HCT116 (cell line): ENCODE measurements at regions of chr14 and their contacts with region 1.

Region 1: DNA sequence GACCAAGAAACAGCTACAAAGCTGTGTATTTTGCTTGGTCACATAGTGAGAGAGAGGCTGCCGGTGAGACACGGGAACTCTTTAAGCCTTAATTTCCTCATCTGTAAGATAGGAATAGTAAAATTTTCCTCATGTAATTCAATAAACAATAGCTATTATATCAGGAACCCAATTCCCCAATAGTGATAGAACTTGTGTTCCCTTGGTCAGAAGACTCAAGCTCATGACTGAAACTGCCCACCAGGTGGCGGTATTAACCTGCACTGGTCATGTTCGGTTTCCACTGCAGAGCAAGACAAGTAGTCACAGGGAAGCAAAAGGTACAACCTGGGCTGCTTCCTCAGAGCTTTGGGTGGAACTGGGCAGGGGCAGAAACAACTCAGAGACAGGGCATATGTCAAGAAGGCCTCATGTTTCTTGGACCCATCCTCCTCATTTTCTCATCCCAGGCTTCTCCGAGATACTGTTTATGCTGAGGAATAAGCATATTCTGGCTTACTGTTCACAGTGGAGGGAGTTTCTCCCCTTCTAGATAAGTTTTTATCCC is 4.2 kb upstream of the AJUBA start:
- DNase-seq: peak; percentile 81
- ATAC-seq: peak; percentile 47
- H3K4me3 ChIP-seq: no peak overlapping the region
- H3K27ac ChIP-seq: no peak overlapping the region
- H3K4me1 ChIP-seq: peaks cover 2 to 9% of the 10 kb centered on the region in 2 experiments; a peak in 2 of 4 replicates
- H3K27me3 ChIP-seq: no peaks in the 10 kb centered on the region
- CTCF ChIP-seq: peak in 2 of 3 experiments; percentile 89 to 98; a peak in 4 of 6 replicates
- POLR2A ChIP-seq: no peak
- RAD21 ChIP-seq: no peak

Region 2: DNA sequence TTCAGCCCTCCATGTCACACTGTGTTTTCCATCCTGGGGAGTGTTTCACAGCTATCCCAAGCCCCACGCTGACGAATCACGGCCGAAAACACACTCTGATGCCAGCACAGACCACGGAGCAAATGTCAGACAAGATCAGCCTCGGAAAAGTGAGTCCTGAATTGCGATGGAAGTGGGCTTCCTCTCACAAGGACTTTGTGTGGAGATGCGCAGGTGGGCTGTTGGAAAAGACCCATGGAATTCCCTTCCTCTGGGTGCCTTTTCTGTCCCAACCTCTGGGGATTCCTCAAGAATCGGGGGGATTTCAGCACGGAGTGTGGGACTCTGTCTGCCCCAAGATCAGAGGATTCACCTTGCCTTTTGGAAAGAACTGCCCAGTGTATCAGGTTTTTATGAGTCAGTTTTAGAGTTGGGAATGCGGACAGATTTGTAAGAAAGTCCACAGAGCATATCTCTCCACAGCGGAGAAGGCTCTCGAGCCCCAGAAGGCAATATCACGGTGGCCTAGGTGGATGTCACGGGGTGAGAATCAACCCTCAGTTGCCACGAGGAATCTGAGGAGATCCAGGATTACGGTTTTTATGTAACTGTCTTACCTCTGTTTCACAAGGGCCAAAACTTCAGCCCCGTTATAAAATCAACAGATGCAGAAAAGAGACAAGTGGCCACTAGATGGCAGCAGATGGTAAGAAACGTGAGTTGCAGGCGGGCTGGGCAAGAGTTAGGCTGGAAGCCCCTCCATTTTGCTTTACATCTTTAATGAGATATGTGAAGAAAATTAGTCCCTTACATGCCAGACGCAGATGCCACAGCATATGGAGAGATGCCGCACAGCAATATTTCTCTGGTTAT is 599.4 kb before region 1 on chr14:
- CTCF ChIA-PET with region 1: no interaction called
- POLR2A ChIA-PET with region 1: no interaction called
- RAD21 ChIA-PET with region 1: no interaction called
- intact Hi-C with region 1: loop called (anchors 10 kb)
- DNase-seq: peak; percentile 53
- ATAC-seq: peak; percentile 75
- H3K4me3 ChIP-seq: no peak overlapping the region
- H3K27ac ChIP-seq: no peak overlapping the region
- H3K4me1 ChIP-seq: no peaks in the 10 kb centered on the region
- H3K27me3 ChIP-seq: peaks cover 83% of the 10 kb centered on the region
- CTCF ChIP-seq: peak; percentile 64 to 89 (median 66)
- POLR2A ChIP-seq: no peak
- RAD21 ChIP-seq: peak; percentile 77

Region 3: DNA sequence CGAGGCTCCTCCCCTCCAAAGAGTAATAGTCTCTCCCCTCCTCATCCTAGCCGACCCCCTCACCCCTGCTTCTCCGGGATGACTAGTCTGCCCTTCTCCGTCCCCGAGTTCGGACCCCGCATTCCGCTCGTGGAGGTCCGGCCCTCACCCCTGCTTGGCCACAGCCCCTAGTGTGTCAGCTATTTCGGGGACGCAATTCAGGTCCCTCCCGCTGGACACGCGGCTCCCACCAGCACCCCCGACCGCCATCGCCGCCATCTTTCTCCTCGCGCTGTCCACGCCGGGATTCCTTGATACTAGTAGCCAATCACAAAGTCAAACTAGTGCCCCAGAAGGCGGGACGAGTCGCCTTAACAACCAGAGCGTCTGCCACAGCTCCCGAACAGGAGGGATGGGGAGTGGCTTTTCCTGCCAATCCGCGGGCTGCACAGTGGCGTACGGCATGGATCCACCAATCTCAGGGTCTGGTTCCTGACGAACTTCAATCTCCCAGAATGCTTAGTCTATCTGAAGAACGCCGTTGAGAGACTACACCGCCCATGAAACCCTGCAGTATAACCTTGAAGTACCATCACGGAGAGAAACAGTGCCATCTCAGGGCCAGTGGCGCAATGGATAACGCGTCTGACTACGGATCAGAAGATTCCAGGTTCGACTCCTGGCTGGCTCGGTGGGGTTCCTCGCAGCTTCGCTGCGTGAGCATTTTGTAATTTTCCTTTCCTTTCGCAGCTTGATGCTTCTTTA is 57.3 kb before region 1 on chr14 and contains the start of gene PRMT5:
- CTCF ChIA-PET with region 1: interaction called, 14 read pairs
- POLR2A ChIA-PET with region 1: interaction called, 3 read pairs
- RAD21 ChIA-PET with region 1: interaction called in 1 of 2 experiments, 3 read pairs
- intact Hi-C with region 1: loop called (anchors 2 kb)
- DNase-seq: peak; percentile 99
- ATAC-seq: peak; percentile 91
- H3K4me3 ChIP-seq: peak within 1 kb of the TSS; percentile 75 to 96
- H3K27ac ChIP-seq: peak within 1 kb of the TSS; percentile 83
- H3K4me1 ChIP-seq: peaks cover 31 to 64% of the 10 kb centered on the region in 2 experiments
- H3K27me3 ChIP-seq: no peaks in the 10 kb centered on the region
- CTCF ChIP-seq: no peak
- POLR2A ChIP-seq: peak; percentile 78
- RAD21 ChIP-seq: no peak
- total RNA-seq, gene PRMT5: 186 TPM

Region 4: DNA sequence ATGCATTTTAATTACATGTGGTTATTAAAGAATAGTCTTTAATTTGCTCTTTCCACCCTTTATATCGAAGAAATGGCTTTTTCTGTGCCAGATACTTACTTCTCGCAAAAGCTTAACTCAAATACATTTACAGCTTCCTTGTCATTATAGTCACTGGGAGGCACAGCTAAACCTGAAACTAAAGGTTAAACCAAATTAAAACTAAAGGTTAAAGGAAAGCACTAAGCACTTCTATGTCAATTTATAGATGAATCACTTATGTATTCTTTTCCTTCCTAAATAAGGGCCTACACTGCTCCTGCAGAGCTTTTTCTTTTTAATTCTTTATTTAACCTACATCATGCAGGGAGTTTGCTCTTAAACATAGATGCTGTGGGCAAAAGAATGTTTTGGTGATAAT is 14.3 kb after region 1 on chr14:
- CTCF ChIA-PET with region 1: interaction called, 71 read pairs
- POLR2A ChIA-PET with region 1: interaction called, 6 read pairs
- RAD21 ChIA-PET with region 1: interaction called, 4 to 6 read pairs
- intact Hi-C with region 1: no loop called
- DNase-seq: no peak
- ATAC-seq: no peak
- H3K4me3 ChIP-seq: no peak overlapping the region
- H3K27ac ChIP-seq: no peak overlapping the region
- H3K4me1 ChIP-seq: peaks cover 2 to 15% of the 10 kb centered on the region in 2 experiments
- H3K27me3 ChIP-seq: no peaks in the 10 kb centered on the region
- CTCF ChIP-seq: no peak
- POLR2A ChIP-seq: no peak
- RAD21 ChIP-seq: no peak

Region 5: GRCh38 chr14:23068476-23069412 is 82.2 kb after region 1 on chr14:
- CTCF ChIA-PET with region 1: interaction called, 41 read pairs
- POLR2A ChIA-PET with region 1: interaction called, 3 read pairs
- RAD21 ChIA-PET with region 1: interaction called, 3 to 5 read pairs
- intact Hi-C with region 1: no loop called
- DNase-seq: peak; percentile 88
- ATAC-seq: peak; percentile 76
- H3K4me3 ChIP-seq: no peak overlapping the region
- H3K27ac ChIP-seq: peak overlapping the region; percentile 54
- H3K4me1 ChIP-seq: peaks cover 29 to 36% of the 10 kb centered on the region in 2 experiments
- H3K27me3 ChIP-seq: no peaks in the 10 kb centered on the region
- CTCF ChIP-seq: peak; percentile 99 to 100 (median 99)
- POLR2A ChIP-seq: no peak
- RAD21 ChIP-seq: peak; percentile 80

Region 6: DNA sequence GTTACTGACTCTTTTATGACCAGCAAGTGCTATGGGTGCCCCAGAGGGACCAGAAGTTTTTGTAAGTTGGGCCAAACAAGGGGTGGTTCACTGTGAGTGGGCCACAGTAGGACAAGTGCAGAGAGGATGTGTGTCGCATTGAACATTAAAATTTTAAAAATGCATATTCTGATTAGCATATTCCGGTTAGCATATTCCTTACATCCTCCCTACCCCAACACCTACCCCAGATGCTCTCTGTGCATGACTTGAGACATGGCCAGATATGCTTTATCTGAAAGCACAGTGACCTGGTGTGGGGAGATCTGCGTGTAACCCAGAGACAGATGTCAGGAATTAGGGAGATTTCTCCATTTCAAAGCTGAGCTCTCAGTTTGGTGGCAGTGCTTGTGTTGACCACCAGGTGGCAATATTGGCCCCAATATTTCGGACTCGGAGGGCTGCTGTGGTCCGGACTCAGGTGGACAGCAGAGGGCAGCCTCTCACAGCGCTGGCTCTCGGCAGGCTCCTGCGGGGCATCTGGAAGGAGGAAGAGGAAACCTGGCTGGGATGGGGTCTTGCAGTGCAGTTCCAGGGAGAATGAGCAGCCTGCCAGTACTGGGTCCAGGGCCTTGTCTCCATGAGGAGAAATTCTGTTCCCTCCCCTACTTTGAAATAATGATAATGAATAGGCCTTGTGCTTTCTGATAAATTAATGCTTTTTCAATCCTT is 134.1 kb after region 1 on chr14:
- CTCF ChIA-PET with region 1: interaction called, 10 read pairs
- POLR2A ChIA-PET with region 1: no interaction called
- RAD21 ChIA-PET with region 1: interaction called in 1 of 2 experiments, 3 read pairs
- intact Hi-C with region 1: no loop called
- DNase-seq: peak; percentile 73
- ATAC-seq: peak; percentile 97
- H3K4me3 ChIP-seq: no peak overlapping the region
- H3K27ac ChIP-seq: no peak overlapping the region
- H3K4me1 ChIP-seq: peaks cover 0 to 3% of the 10 kb centered on the region in 2 experiments; a peak in 2 of 4 replicates
- H3K27me3 ChIP-seq: no peaks in the 10 kb centered on the region
- CTCF ChIP-seq: peak; percentile 100
- POLR2A ChIP-seq: no peak
- RAD21 ChIP-seq: peak; percentile 99